ENCODE measurements at regions of chr3 and their contacts with region 1.

Region 1: DNA sequence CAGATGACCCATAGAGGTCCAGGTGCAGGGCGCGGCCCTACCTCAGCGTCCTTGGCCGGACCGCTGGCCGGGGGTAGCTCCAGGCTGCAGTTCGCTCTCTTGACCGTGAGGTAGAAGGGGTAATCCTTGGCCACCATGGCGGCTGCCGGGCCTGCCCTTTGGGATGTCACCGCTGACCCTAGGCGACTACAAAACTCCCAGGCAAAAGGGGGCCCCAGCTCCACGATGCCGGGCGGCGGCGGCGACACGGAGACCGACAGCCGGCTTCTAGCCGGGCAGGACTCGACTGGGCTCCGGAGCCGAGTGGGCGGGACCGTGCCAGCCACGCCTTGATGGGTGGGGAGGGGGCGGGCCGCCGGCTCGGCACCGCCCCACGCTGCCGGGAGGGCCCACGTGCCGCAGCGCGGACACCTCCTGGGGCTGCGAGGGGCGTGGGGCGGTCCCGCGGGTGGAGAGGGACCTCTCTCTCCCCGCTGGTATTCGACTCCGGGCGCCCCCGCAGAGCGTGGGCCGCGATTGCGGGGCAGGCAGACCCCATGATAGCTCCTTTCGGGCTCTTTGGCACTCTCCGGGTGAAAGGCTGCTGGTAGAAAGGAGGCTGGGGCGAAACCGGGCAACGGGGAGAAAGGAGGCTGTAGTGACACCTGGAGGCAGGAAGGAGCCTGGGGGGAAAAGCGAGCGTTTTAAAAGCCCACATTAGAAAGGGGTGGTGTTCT is at the start of gene ARHGEF3:
- DNase-seq: peak; percentile 87 to 95 (median 90)
- ATAC-seq: peak; percentile 86 to 98 (median 96)
- H3K4me3 ChIP-seq: peak within 1 kb of the TSS; percentile 70 to 94 (median 86)
- H3K27ac ChIP-seq: peak within 1 kb of the TSS; percentile 26 to 87 (median 72)
- H3K4me1 ChIP-seq: peaks cover 3 to 50% (median 29%) of the 10 kb centered on the region in 12 donors
- H3K27me3 ChIP-seq: no peaks in the 10 kb centered on the region
- CTCF ChIP-seq: peak in 10 of 12 donors; percentile 26 to 61 (median 48)
- POLR2A ChIP-seq: peak in 1 of 2 donors; percentile 94
- total RNA-seq, gene ARHGEF3: 13.5 to 36.8 (median 18.2) TPM

Region 2: DNA sequence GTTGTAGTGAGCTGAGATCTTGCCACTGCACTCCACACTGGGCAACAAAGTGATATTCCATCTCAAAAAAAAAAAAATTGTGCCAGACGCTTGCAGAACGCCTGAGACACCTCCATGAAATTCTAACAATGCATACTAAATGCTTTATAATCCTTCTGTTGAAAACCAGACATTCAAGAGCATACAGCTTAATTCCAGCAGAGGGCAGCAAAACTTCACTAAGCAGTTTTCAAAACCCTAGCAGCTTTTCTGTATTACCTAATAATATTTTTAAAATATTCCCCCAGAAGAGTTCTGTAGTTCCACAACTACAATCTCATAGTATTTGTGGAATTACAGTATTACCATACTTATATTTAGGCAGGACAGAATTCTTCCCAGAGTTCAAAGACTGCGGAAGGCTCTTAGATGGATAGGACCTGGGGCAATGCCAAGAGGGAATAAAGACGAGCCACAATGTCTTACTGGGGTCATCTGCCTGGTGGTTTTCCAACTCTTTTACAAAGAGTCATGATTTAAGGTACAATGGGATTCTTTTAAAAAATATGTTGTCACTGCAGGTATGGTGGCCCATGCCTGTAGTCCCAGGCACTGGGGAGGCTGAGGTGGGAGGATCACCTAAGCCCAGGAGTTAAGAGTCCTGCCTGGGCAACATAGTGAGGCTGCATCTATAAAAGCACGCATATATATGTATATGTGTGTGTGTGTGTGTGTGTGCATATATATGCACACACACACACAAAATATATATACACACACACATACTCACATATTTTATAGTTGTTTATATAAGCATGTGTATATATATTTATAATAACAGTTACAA is 99.1 kb before region 1 on chr3:
- intact Hi-C with region 1: loop called (anchors 1 to 5 kb)
- DNase-seq: peak in 2 of 5 donors; percentile 20 to 39
- ATAC-seq: peak; percentile 60 to 75 (median 64)
- H3K4me3 ChIP-seq: no peak overlapping the region
- H3K27ac ChIP-seq: no peak overlapping the region
- H3K4me1 ChIP-seq: peaks cover 0 to 7% (median 0%) of the 10 kb centered on the region in 12 donors
- H3K27me3 ChIP-seq: no peaks in the 10 kb centered on the region
- CTCF ChIP-seq: peak; percentile 81 to 97 (median 88)
- POLR2A ChIP-seq: no peak

Region 3: DNA sequence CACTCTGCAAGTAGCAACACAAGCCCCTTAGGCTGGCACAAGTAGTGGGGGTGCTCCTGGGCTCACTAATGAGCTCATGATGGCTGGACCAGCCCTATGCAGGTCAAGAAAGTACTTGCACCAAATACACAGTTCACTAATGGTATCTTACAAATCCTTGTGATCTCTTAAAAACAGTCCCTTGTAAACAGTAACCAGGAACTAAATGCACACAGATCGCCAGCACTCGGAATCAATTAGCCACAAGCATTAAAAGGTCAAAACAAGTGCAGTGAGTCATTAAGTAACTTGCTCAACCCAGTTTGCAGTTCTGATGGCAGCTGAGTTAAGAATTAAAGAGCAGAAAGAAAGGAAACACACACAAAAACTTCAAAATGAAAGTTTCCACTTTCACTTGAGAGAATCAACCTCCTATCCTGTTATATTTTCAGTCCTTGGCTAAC is 43.3 kb before region 1 on chr3:
- intact Hi-C with region 1: loop called in 5 of 10 experiments (anchors 5 kb)
- DNase-seq: no peak
- ATAC-seq: peak in 3 of 4 donors; percentile 23 to 64 (median 33)
- H3K4me3 ChIP-seq: no peak overlapping the region
- H3K27ac ChIP-seq: peak overlapping the region in 8 of 12 donors; percentile 1 to 88 (median 32)
- H3K4me1 ChIP-seq: peaks cover 5 to 76% (median 43%) of the 10 kb centered on the region in 12 donors
- H3K27me3 ChIP-seq: no peaks in the 10 kb centered on the region
- CTCF ChIP-seq: no peak
- POLR2A ChIP-seq: no peak

Region 4: DNA sequence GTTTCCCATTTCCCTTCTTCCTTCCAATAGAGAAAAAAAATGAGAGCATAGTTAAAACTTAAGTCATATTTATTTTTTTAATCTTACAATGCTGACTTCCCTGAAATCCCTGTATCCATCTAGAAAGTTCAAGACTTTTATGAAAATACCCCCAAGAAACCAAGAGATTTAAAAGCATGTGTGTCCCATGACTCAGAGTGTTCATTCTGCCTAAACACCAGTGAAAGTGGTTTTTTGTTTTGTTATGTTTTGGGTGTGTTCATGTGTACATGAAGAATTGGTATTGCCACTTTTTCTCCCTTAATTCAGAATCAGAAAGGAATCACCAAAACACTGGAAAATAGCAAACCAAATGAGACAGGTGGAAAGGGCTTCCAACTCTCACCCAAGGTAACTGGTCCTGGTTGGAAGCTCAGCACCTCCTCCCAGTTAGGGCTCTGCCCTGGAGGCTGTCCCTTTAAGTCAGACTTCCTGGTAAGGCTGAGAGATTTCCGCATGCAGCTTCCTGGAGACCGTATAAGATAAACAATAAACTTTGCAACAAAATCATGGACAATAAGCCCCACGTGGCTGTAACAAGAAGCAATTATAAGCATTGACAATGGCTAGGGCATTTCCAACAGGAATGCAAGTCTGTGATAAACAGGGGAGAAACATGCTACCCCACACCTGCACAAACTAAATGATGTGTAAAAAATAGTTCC is 121.9 kb after region 1 on chr3:
- intact Hi-C with region 1: loop called in 6 of 10 experiments (anchors 5 to 10 kb)
- DNase-seq: peak in 4 of 5 donors; percentile 49 to 71 (median 63)
- ATAC-seq: peak; percentile 67 to 88 (median 78)
- H3K4me3 ChIP-seq: no peak overlapping the region
- H3K27ac ChIP-seq: peak overlapping the region in 11 of 12 donors; percentile 13 to 79 (median 69)
- H3K4me1 ChIP-seq: peaks cover 2 to 81% (median 62%) of the 10 kb centered on the region in 12 donors
- H3K27me3 ChIP-seq: no peaks in the 10 kb centered on the region
- CTCF ChIP-seq: peak in 1 of 12 donors; percentile 6
- POLR2A ChIP-seq: no peak

Region 5: DNA sequence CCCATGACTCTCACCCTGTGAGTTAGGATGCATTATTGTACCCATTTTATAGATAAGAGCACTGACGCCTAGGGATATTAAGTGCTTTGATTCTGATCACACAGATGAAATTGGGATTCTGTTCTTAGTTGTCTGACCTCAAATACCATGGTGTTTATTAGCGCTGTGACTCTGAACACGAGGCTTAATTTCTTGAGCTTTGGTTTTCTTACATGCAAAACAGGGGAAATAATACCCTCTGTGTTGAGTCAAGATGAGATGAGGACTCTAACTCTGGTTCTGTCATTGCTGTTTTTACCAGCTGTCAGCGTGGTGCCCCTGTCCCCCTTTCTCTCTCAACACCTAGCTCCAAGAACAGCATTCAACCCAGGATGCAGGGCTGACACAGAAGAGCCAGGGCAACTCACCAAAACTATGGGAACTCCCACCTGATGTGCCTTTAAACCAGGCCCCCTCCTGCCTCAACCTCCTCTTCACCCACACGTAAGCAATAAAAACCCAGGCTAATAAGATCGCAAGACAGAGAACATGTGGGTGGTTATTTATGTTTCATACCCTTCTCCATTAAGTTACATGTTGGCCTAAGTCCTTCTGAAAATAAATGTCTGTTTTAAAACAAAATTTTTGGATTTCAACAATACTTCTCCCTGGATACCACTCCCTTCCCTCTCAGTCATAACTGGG is 158.6 kb after region 1 on chr3:
- intact Hi-C with region 1: no loop called
- DNase-seq: no peak
- ATAC-seq: no peak
- H3K4me3 ChIP-seq: no peak overlapping the region
- H3K27ac ChIP-seq: no peak overlapping the region
- H3K4me1 ChIP-seq: no peaks in the 10 kb centered on the region
- H3K27me3 ChIP-seq: no peaks in the 10 kb centered on the region
- CTCF ChIP-seq: no peak
- POLR2A ChIP-seq: no peak

Region 6: GRCh38 chr3:57227204-57227929 is 425.5 kb after region 1 on chr3 and contains the start of gene APPL1:
- intact Hi-C with region 1: loop called in 1 of 10 experiments (anchors 10 kb)
- DNase-seq: peak; percentile 94 to 98 (median 95)
- ATAC-seq: peak; percentile 95 to 99 (median 98)
- H3K4me3 ChIP-seq: peak within 1 kb of the TSS; percentile 57 to 97 (median 84)
- H3K27ac ChIP-seq: peak within 1 kb of the TSS; percentile 91 to 98 (median 94)
- H3K4me1 ChIP-seq: peaks cover 4 to 41% (median 25%) of the 10 kb centered on the region in 12 donors
- H3K27me3 ChIP-seq: no peaks in the 10 kb centered on the region
- CTCF ChIP-seq: no peak
- POLR2A ChIP-seq: peak; percentile 57 to 96
- total RNA-seq, gene APPL1: 38.1 to 60.9 (median 46.8) TPM